ENCODE measurements at regions of chr17 and their contacts with region 1.

Region 1: DNA sequence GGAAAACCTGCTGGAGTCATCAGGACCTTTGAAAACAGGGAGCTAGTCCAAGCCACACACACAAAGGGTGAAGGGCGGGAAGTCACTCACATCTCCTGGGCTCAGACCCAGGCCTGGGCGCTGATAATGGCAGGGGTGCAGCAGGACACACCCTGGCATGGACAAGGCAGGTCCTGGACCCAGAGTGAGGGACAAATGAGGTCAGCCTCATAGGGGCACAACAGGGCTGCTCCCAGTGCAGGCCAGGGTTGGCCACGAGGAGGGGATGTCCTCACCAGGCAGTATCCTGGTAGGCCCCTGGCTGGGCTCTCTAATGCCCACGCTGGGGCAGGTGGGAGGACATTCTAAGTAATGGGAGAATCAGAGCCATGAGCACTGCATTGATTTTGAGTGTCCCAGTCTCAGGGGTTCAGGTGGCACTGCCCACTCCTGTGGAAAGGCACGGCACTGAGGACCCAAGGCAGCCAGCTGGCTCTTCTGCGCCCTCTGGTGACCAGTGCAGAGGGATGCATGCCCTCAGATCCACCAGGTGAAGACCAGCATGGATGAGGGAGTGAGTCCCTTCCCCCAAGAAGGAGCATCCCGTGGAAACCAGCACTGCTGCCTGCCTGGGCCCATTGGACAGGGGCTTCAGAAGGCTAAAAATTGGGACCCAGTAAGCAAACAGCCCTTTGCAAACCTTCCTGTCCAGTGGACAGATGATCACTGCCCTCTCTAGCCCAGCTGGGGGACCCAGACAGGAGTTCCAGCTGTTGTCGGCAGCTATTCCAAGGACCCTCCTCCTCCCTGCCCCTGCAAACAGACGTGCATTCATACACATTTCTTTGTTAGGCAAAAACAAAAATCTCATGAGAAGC is 23.4 kb upstream of the SREBF1 start:
- DNase-seq: peak; percentile 85
- ATAC-seq: peak; percentile 95

Region 2: DNA sequence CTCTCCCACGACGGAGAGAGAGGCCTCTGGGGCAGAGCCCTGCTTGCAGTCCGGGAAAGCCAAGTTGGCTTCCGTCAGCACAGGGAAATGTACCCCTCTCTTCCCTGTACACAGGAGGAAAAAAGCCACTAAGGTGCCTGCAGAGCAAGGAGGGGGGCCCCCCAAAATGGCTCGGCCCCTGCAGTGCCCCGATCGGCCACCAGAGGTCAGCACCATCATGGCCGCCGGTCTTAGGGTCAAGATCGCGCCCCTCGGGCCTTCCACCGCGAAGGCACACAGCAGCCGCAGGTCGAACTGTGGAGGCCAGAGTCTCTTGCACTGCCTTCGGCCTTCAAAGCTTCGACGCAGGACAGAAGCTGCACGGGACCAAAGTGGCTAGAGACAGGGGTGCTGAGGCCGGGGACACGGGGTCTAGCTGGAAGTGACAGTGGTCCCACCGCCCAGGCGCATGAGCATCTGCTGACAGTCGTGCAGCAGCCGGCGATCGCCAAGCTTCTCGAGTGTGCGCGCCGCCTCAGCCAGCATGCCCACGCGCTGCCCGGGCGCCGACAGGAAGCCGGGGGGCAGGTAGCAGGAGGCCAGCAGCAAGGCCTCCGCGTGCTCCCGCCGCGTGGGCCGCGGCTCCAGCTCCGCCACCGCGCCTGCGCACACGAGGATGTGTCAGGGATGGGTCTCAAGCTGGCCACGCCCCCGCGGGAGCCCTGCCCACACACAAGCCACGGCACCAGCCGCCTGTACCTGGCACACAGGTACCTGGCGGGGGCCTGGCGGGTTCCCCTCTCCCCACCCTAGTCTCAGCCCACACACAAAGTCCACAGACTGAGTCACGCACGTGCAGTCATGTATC is 47.7 kb before region 1 on chr17:
- intact Hi-C with region 1: loop called (anchors 1 kb)
- DNase-seq: peak; percentile 88
- ATAC-seq: peak; percentile 51